Lower leg skin (tissue), 4 donors: ENCODE measurements at regions of chr5 and their contacts with region 1.

Region 1: GRCh38 chr5:761854-762710 is 22.4 kb downstream of the ZDHHC11B start:
- DNase-seq: peak in 1 of 2 donors; percentile 85
- H3K4me3 ChIP-seq: no peak overlapping the region
- CTCF ChIP-seq: no peak
- POLR2A ChIP-seq: no peak

Region 2: DNA sequence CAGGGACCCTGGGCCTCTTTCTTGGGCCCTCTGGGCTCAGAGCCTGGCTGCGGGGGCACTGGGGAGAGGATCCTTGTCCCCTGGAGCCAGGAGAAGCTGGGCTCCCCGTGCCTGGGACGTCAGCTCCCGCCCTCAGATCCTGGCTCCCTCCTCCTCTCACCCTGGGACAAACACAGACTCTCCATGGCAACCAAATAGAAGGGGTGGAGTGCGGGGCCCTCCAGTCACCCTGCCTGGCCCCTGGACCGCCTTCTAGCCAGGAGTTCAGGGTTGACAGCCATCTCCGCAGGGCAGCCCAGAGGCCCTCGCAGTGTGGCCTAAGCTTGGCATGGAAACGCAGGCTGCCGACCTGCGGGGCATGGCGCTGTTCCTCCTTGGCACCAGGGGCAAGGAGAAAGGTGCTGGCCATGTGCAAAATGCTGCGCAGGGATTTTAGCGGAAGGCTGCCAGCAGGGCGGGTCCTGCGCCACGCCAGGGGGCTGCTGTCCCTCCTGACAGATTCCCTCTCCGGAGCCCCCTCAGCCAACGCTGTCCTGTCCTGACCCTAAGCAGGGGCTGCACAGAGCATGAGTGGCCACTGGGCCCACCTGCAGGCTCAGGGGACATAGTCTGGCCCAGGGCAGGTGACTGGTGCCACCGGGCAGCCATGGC is 87.7 kb after region 1 on chr5:
- intact Hi-C with region 1: loop called (anchors 10 kb)
- DNase-seq: peak in 1 of 2 donors; percentile 78
- H3K4me3 ChIP-seq: no peak overlapping the region
- CTCF ChIP-seq: no peak
- POLR2A ChIP-seq: no peak

Region 3: DNA sequence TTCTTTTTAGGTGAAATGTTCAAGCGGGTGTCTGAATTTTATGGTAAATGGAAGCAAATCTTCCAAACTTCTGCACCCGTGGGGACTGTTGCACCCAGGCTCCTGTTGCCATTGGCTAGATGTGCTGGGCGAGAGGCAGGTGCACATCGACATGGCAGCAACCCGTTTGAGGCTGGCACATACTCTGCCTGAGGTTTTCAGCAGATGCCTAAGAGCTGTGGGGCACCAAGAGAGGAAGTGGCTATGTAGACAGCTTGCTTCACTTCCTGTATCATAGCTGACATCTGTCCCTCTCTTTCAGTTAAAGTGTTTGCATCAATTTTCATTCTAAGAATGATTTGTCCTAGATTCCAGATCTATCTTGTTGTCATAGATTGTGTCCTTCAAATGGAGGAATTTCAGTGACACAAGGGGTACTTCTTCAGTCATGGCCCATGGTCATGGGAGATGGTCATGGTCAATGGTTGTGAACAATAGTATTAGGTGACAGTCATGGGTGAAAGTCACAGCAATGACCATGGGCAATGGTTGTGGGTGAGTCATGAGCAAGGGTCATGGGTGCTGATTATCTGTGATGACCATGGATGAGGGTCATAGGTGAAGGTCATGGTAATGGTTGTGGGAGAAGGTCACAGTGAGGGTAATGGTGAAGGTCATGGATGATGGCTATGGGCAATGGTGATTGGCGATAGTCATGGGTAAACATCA is 1235.7 kb after region 1 on chr5:
- intact Hi-C with region 1: no loop called
- DNase-seq: peak; percentile 7 to 40
- H3K4me3 ChIP-seq: no peak overlapping the region
- CTCF ChIP-seq: no peak
- POLR2A ChIP-seq: no peak